ENCODE measurements at regions of chr9 and their contacts with region 1.

Region 1: GRCh38 chr9:134449221-134449894 is 123.1 kb downstream of the RXRA start:
- DNase-seq: peak; percentile 91 to 95 (median 94)
- ATAC-seq: peak; percentile 93 to 98 (median 96)
- H3K4me3 ChIP-seq: no peak overlapping the region
- H3K27ac ChIP-seq: no peak overlapping the region
- H3K4me1 ChIP-seq: peaks cover 0 to 5% (median 0%) of the 10 kb centered on the region in 12 donors
- H3K27me3 ChIP-seq: no peaks in the 10 kb centered on the region
- CTCF ChIP-seq: peak; percentile 84 to 97 (median 93)
- POLR2A ChIP-seq: no peak

Region 2: GRCh38 chr9:134738869-134739659 is 289.7 kb after region 1 on chr9:
- intact Hi-C with region 1: loop called (anchors 1 to 2 kb)
- DNase-seq: peak; percentile 61 to 87 (median 79)
- ATAC-seq: peak; percentile 16 to 64 (median 49)
- H3K4me3 ChIP-seq: no peak overlapping the region
- H3K27ac ChIP-seq: no peak overlapping the region
- H3K4me1 ChIP-seq: peaks cover 0 to 39% (median 11%) of the 10 kb centered on the region in 12 donors
- H3K27me3 ChIP-seq: no peaks in the 10 kb centered on the region
- CTCF ChIP-seq: peak; percentile 81 to 93 (median 92)
- POLR2A ChIP-seq: no peak

Measured in heart left ventricle (tissue), 16 donors.